ENCODE measurements at regions of chr11 and their contacts with region 1.

Region 1: DNA sequence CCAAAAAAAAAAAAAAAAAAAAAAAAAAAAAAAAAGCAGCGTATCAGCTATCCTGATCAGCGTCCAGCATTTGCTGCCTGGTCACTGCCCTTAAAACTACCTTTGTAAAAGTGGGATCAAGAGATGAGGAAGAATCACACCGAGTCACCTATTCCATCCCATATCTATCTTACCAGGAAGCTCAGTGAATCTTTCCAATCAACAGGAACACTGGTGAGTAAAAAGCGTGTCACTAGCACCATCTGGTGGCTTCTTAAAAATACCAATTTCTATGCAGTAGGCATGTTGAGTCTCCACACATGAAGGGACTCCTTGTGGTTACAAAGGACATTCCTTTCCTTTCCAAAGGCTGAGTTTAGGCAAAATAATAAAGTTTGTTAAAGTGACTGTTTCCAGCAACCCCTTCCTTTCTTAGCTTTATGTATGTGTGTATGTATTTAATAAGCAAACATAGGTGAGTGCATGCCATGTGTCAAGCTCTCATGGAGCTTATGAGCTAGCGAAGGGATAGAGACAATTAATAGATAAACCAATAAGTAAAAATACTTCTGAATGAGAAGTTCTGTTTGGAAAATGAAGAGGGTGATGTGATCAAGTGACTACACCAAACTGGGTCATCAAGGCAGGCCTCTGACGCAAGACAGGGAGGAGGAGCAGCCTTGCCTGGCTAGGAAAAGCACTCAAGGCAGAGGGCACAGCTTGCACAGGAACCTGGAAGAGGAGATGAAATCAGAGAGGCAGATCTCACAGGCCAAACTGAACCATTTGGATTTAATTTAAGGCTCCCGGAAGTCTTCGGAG is 13.9 kb upstream of the TP53AIP1 start:
- DNase-seq: peak; percentile 75 to 87
- H3K4me3 ChIP-seq: no peak overlapping the region
- H3K4me3 Mint-ChIP-seq: no peak overlapping the region
- H3K27ac Mint-ChIP-seq: no peak overlapping the region
- H3K4me1 ChIP-seq: no peaks in the 10 kb centered on the region
- H3K4me1 Mint-ChIP-seq: no peaks in the 10 kb centered on the region
- H3K27me3 ChIP-seq: no peaks in the 10 kb centered on the region
- H3K27me3 Mint-ChIP-seq: peaks cover 12% of the 10 kb centered on the region
- CTCF ChIP-seq: peak; percentile 87 to 90

Region 2: DNA sequence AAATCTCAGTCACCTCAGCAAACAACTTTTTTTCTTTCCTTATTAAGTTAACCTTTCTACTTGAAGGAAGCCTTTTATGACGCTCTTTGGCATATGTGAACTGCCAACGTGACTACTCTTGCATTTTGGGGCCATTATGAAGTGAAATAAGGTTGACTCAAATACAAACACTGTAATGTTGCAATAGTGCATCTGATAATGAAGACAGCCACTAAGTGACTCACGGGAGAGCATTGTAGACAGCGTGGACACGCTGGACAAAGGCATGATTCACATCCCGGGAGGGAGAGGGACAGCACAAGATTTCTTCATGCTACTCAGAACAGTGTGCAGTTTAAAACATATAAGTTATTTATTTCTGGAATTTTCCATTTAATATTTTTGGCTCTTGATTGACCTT is 930.0 kb before region 1 on chr11:
- CTCF ChIA-PET with region 1: no interaction called
- POLR2A ChIA-PET with region 1: no interaction called
- intact Hi-C with region 1: loop called (anchors 1 kb)
- DNase-seq: no peak
- H3K4me3 ChIP-seq: no peak overlapping the region
- H3K4me3 Mint-ChIP-seq: no peak overlapping the region
- H3K27ac Mint-ChIP-seq: no peak overlapping the region
- H3K4me1 ChIP-seq: no peaks in the 10 kb centered on the region
- H3K4me1 Mint-ChIP-seq: peaks cover 7% of the 10 kb centered on the region
- H3K27me3 ChIP-seq: no peaks in the 10 kb centered on the region; the same call in 1 of the 2 replicates
- H3K27me3 Mint-ChIP-seq: peaks cover 14% of the 10 kb centered on the region
- CTCF ChIP-seq: no peak

Region 3: DNA sequence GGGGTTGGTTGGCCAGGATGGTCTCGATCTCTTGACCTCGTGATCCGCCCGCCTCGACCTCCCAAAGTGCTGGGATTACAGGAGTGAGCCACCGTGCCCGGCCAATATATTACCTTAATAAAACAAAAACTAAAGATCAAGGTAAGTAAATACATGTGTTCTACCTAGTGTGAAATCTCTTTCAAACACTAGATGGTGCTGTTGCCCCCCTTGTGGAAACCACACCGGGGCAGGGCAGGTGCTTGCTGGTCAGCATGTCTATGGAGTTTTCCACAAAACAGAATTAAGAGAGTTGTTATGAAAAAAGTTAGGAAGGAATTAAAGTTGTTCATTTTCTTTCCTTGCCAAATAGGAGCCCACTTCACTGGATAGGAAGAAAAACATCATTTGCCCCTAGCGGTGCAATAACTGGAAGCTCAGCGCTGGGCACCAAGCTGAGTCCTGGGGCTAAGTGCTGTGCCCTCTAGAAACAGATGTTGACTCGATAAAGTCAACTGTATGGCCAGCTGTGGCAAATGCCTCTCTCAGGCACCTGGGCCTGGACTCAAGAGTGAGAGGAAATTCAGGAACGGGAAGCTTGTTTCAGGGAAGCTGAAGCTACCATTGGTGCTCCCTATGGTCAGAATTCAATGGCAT is 71.8 kb before region 1 on chr11:
- CTCF ChIA-PET with region 1: interaction called, 223 read pairs
- POLR2A ChIA-PET with region 1: interaction called, 4 read pairs
- intact Hi-C with region 1: loop called (anchors 1 kb)
- DNase-seq: peak; percentile 78 to 91
- H3K4me3 ChIP-seq: no peak overlapping the region
- H3K4me3 Mint-ChIP-seq: no peak overlapping the region
- H3K27ac Mint-ChIP-seq: no peak overlapping the region
- H3K4me1 ChIP-seq: no peaks in the 10 kb centered on the region; the same call in 1 of the 2 replicates
- H3K4me1 Mint-ChIP-seq: no peaks in the 10 kb centered on the region
- H3K27me3 ChIP-seq: no peaks in the 10 kb centered on the region; the same call in none of the 2 replicates
- H3K27me3 Mint-ChIP-seq: peaks cover 33% of the 10 kb centered on the region
- CTCF ChIP-seq: peak; percentile 96 to 97

Region 4: GRCh38 chr11:128890543-128891368 is 65.8 kb before region 1 on chr11 and contains the start of gene KCNJ5:
- CTCF ChIA-PET with region 1: interaction called, 223 read pairs
- POLR2A ChIA-PET with region 1: no interaction called
- intact Hi-C with region 1: no loop called
- DNase-seq: peak in 1 of 2 experiments; percentile 70
- H3K4me3 ChIP-seq: peak within 1 kb of the TSS; percentile 36
- H3K4me3 Mint-ChIP-seq: peak within 1 kb of the TSS; percentile 76
- H3K27ac Mint-ChIP-seq: no peak within 1 kb of the TSS
- H3K4me1 ChIP-seq: peaks cover 10% of the 10 kb centered on the region
- H3K4me1 Mint-ChIP-seq: no peaks in the 10 kb centered on the region
- H3K27me3 ChIP-seq: peaks cover 1% of the 10 kb centered on the region
- H3K27me3 Mint-ChIP-seq: peaks cover 17% of the 10 kb centered on the region
- CTCF ChIP-seq: no peak
- total RNA-seq, gene KCNJ5: not detected in 2 replicates

Region 5: GRCh38 chr11:128905345-128906184 is 51.0 kb before region 1 on chr11:
- CTCF ChIA-PET with region 1: interaction called, 30 read pairs
- POLR2A ChIA-PET with region 1: no interaction called
- intact Hi-C with region 1: loop called (anchors 1 kb)
- DNase-seq: peak; percentile 78 to 80
- H3K4me3 ChIP-seq: peak overlapping the region; percentile 35
- H3K4me3 Mint-ChIP-seq: peak overlapping the region; percentile 70
- H3K27ac Mint-ChIP-seq: peak overlapping the region; percentile 3
- H3K4me1 ChIP-seq: peaks cover 6% of the 10 kb centered on the region
- H3K4me1 Mint-ChIP-seq: peaks cover 6% of the 10 kb centered on the region
- H3K27me3 ChIP-seq: no peaks in the 10 kb centered on the region; the same call in 1 of the 2 replicates
- H3K27me3 Mint-ChIP-seq: peaks cover 7% of the 10 kb centered on the region
- CTCF ChIP-seq: peak; percentile 79 to 84

Measured in Caco-2 (cell line).